ENCODE measurements at regions of chr11 and their contacts with region 1.

Region 1: GRCh38 chr11:20647976-20648565 is 21.3 kb upstream of the NELL1 start:
- DNase-seq: peak in 5 of 9 donors; percentile 9 to 32 (median 21)
- ATAC-seq: peak; percentile 49
- H3K4me3 ChIP-seq: no peak overlapping the region
- H3K4me3 Mint-ChIP-seq: no peak overlapping the region
- H3K27ac ChIP-seq: no peak overlapping the region
- H3K27ac Mint-ChIP-seq: no peak overlapping the region
- H3K4me1 ChIP-seq: no peaks in the 10 kb centered on the region
- H3K4me1 Mint-ChIP-seq: no peaks in the 10 kb centered on the region
- H3K27me3 ChIP-seq: no peaks in the 10 kb centered on the region
- H3K27me3 Mint-ChIP-seq: peaks cover 0 to 19% (median 13%) of the 10 kb centered on the region in 5 donors

Region 2: DNA sequence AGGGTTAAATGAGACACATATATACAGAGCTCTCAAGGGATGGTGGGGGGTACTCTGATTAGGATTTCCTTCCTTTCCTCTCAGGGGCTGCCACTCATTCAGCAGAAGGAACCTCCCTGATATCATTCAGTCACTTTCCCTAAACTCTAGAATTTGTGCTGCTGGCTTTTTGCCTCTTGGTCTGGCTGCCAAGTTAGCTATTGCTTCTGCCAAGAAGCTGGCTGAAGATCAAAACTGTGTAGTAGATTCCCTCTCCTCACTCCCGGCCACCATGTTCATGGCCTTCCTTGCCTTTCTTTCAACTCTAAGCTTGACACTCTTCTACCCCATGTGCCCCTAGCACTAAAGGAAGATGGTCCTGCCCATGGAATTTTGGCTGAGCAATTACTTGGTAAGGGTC is 30.0 kb before region 1 on chr11:
- CTCF ChIA-PET with region 1: no interaction called
- POLR2A ChIA-PET with region 1: no interaction called
- intact Hi-C with region 1: no loop called
- DNase-seq: no peak
- ATAC-seq: no peak
- H3K4me3 ChIP-seq: no peak overlapping the region
- H3K4me3 Mint-ChIP-seq: no peak overlapping the region
- H3K27ac ChIP-seq: no peak overlapping the region
- H3K27ac Mint-ChIP-seq: no peak overlapping the region
- H3K4me1 ChIP-seq: no peaks in the 10 kb centered on the region
- H3K4me1 Mint-ChIP-seq: peaks cover 0 to 3% (median 0%) of the 10 kb centered on the region in 7 donors
- H3K27me3 ChIP-seq: no peaks in the 10 kb centered on the region
- H3K27me3 Mint-ChIP-seq: peaks cover 9 to 40% (median 37%) of the 10 kb centered on the region in 5 donors

Region 3: GRCh38 chr11:20671856-20672546 is 23.9 kb after region 1 on chr11:
- CTCF ChIA-PET with region 1: no interaction called
- POLR2A ChIA-PET with region 1: no interaction called
- intact Hi-C with region 1: loop called in 1 of 2 experiments (anchors 2 kb)
- DNase-seq: no peak
- ATAC-seq: no peak
- H3K4me3 ChIP-seq: no peak overlapping the region
- H3K4me3 Mint-ChIP-seq: no peak overlapping the region
- H3K27ac ChIP-seq: no peak overlapping the region
- H3K27ac Mint-ChIP-seq: no peak overlapping the region
- H3K4me1 ChIP-seq: no peaks in the 10 kb centered on the region
- H3K4me1 Mint-ChIP-seq: peaks cover 0 to 19% (median 10%) of the 10 kb centered on the region in 7 donors
- H3K27me3 ChIP-seq: peaks cover 0 to 9% of the 10 kb centered on the region in 2 donors
- H3K27me3 Mint-ChIP-seq: peaks cover 55 to 88% (median 75%) of the 10 kb centered on the region in 5 donors

Region 4: DNA sequence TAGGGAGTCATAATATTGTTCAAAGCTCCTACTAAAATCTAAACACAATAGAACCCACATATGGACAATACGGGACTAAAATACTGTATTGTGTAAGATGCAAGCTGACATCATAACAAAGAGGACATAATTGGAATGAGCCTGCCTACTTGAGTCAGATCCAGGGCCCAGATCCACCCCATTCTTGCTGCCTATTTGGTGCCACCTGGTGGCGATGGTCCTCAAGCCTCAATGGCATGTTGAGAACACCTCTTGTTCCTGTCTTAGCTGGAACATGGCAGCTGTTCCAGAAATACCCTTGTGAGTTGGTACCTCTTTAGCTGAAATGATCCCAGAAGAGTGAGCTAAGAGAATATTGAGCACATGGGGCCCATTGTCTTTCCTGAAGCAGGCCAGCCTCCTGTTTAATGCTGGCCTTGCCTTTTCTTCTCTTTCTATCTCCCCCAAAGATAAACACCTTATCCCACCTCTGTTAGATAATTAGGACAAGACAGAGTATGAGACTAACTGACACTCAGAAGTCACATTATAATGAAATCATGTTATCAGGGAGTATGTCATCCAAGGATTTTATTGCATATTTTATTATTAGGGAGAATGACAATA is 863.9 kb after region 1 on chr11:
- CTCF ChIA-PET with region 1: no interaction called
- POLR2A ChIA-PET with region 1: no interaction called
- intact Hi-C with region 1: loop called in 1 of 2 experiments (anchors 5 kb)
- DNase-seq: peak in 1 of 9 donors; percentile 28
- ATAC-seq: peak; percentile 64
- H3K4me3 ChIP-seq: no peak overlapping the region
- H3K4me3 Mint-ChIP-seq: no peak overlapping the region
- H3K27ac ChIP-seq: no peak overlapping the region
- H3K27ac Mint-ChIP-seq: no peak overlapping the region
- H3K4me1 ChIP-seq: no peaks in the 10 kb centered on the region
- H3K4me1 Mint-ChIP-seq: no peaks in the 10 kb centered on the region
- H3K27me3 ChIP-seq: no peaks in the 10 kb centered on the region
- H3K27me3 Mint-ChIP-seq: no peaks in the 10 kb centered on the region

Measured in naive thymus-derived CD4-positive, alpha-beta T cell (primary cell).